MCF 10A (cell line): ENCODE measurements at regions of chr17 and their contacts with region 1.

Region 1: DNA sequence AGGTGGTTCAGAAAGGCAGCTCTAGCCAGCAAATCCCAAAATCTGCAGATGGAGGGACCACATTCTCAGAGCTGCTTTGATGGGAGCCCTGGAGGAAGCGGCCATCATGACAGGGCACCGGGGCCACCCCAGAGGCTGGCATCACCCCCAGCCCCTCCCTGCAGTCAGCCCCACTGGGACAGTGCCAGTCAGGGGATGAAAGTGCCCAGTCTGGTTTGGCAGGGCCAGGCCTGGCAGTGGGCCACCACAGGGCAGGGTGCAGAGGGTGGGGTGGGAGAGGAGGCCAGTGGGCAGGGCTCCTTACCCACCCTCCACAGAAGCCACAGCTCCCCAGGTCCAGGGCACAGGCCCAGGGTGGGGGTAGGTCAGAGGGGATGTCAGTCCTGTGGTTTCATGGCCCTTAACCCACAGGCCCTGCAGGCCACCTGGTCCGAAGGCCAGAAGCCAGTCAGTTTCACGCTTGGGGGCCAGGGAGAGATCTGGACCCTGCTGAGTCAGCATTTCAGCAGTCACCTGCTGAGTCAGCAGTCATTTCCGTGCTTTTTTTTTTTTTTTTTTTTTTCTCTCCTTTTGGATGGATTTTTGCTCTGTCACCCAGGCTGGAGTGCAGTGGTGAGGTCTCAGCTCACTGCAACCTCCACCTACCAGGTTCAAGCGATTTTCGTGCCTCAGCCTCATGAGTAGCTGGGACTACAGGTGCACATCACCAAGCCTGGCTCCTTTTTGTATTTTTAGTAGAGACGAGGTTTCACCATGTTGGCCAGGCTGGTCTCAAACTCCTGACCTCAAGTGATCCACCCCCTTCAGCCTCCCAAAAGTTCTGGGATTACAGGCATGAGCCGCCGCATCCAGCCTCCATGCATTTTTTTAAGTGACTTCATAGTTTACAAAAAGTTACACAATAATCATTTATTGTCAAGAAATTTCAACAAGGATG is 10.4 kb downstream of the SLC25A10 start:
- DNase-seq: no peak
- H3K4me3 Mint-ChIP-seq: no peak overlapping the region
- H3K27ac Mint-ChIP-seq: no peak overlapping the region
- H3K4me1 Mint-ChIP-seq: peaks cover 21% of the 10 kb centered on the region
- H3K27me3 Mint-ChIP-seq: no peaks in the 10 kb centered on the region
- CTCF ChIP-seq: no peak

Region 2: GRCh38 chr17:81711814-81712467 is 10.5 kb before region 1 on chr17 and contains the start of gene SLC25A10:
- CTCF ChIA-PET with region 1: interaction called, 6 read pairs
- POLR2A ChIA-PET with region 1: interaction called, 49 read pairs
- intact Hi-C with region 1: no loop called
- DNase-seq: peak; percentile 85
- H3K4me3 Mint-ChIP-seq: peak within 1 kb of the TSS; percentile 84
- H3K27ac Mint-ChIP-seq: peak within 1 kb of the TSS; percentile 33
- H3K4me1 Mint-ChIP-seq: peaks cover 6% of the 10 kb centered on the region
- H3K27me3 Mint-ChIP-seq: no peaks in the 10 kb centered on the region
- CTCF ChIP-seq: no peak
- total RNA-seq, gene SLC25A10: 5.1 and 9.5 TPM in 2 replicates

Region 3: GRCh38 chr17:81733507-81734404 is 11.3 kb after region 1 on chr17:
- CTCF ChIA-PET with region 1: interaction called, 11 read pairs
- POLR2A ChIA-PET with region 1: interaction called, 3 read pairs
- intact Hi-C with region 1: no loop called
- DNase-seq: peak; percentile 80
- H3K4me3 Mint-ChIP-seq: no peak overlapping the region
- H3K27ac Mint-ChIP-seq: no peak overlapping the region
- H3K4me1 Mint-ChIP-seq: peaks cover 6% of the 10 kb centered on the region
- H3K27me3 Mint-ChIP-seq: no peaks in the 10 kb centered on the region
- CTCF ChIP-seq: peak; percentile 93

Region 4: GRCh38 chr17:81860756-81861518 is 138.5 kb after region 1 on chr17:
- CTCF ChIA-PET with region 1: no interaction called
- POLR2A ChIA-PET with region 1: interaction called, 16 read pairs
- intact Hi-C with region 1: no loop called
- DNase-seq: peak; percentile 100
- H3K4me3 Mint-ChIP-seq: peak overlapping the region; percentile 89
- H3K27ac Mint-ChIP-seq: peak overlapping the region; percentile 98
- H3K4me1 Mint-ChIP-seq: peaks cover 33% of the 10 kb centered on the region
- H3K27me3 Mint-ChIP-seq: no peaks in the 10 kb centered on the region
- CTCF ChIP-seq: no peak